WTC11 (cell line): ENCODE measurements at regions of chr20 and their contacts with region 1.

Region 1: GRCh38 chr20:37178839-37179670 is at the starts of genes MROH8 and RPN2:
- DNase-seq: peak; percentile 98
- ATAC-seq: peak; percentile 98
- H3K4me3 Mint-ChIP-seq: peak within 1 kb of the TSS; percentile 81
- H3K27ac Mint-ChIP-seq: peak within 1 kb of the TSS; percentile 98
- H3K4me1 Mint-ChIP-seq: peaks cover 14% of the 10 kb centered on the region
- H3K27me3 Mint-ChIP-seq: no peaks in the 10 kb centered on the region; the same call in 1 of the 2 replicates
- CTCF ChIP-seq: no peak
- total RNA-seq, gene MROH8: 0.50 to 0.92 TPM (median 0.89 TPM) in 3 replicates
- total RNA-seq, gene RPN2: 205 to 233 TPM (median 227 TPM) in 3 replicates

Region 2: GRCh38 chr20:37095599-37096414 is 83.2 kb before region 1 on chr20 and contains the start of gene RBL1:
- CTCF ChIA-PET with region 1: interaction called, 5 read pairs
- POLR2A ChIA-PET with region 1: interaction called, 19 read pairs
- DNase-seq: peak; percentile 91
- ATAC-seq: peak; percentile 93
- H3K4me3 Mint-ChIP-seq: peak within 1 kb of the TSS; percentile 95
- H3K27ac Mint-ChIP-seq: peak within 1 kb of the TSS; percentile 100
- H3K4me1 Mint-ChIP-seq: peaks cover 23% of the 10 kb centered on the region
- H3K27me3 Mint-ChIP-seq: no peaks in the 10 kb centered on the region
- CTCF ChIP-seq: no peak
- total RNA-seq, gene RBL1: 10.5 to 13.2 TPM (median 11.1 TPM) in 3 replicates

Region 3: DNA sequence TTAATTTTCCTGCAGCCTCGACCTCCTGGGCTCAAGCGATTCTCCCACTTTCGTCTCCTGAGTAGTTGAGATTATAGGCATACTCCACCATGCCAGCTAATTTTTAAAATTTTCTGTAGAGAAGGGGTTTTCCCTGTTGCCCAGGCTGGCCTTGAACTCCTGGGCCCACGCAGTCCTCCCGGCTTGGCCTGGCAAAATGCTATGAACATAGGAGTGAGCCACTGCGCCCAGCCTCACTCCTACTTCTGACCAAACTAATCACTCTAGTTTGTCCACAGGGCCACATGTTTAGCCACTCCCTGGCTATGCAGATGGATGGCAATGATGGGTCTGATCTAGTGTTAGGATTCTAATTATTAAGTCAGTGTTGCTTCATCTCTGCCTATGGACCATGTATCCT is 31.8 kb before region 1 on chr20:
- CTCF ChIA-PET with region 1: no interaction called
- POLR2A ChIA-PET with region 1: no interaction called
- DNase-seq: no peak
- ATAC-seq: no peak
- H3K4me3 Mint-ChIP-seq: no peak overlapping the region
- H3K27ac Mint-ChIP-seq: no peak overlapping the region
- H3K4me1 Mint-ChIP-seq: no peaks in the 10 kb centered on the region
- H3K27me3 Mint-ChIP-seq: no peaks in the 10 kb centered on the region; the same call in 1 of the 2 replicates
- CTCF ChIP-seq: no peak

Region 4: GRCh38 chr20:37243937-37244571 is 65.0 kb after region 1 on chr20:
- CTCF ChIA-PET with region 1: no interaction called
- POLR2A ChIA-PET with region 1: no interaction called
- DNase-seq: no peak
- ATAC-seq: no peak
- H3K4me3 Mint-ChIP-seq: no peak overlapping the region
- H3K27ac Mint-ChIP-seq: peak overlapping the region; percentile 97; the same call in 1 of the 2 replicates
- H3K4me1 Mint-ChIP-seq: peaks cover 22% of the 10 kb centered on the region
- H3K27me3 Mint-ChIP-seq: no peaks in the 10 kb centered on the region
- CTCF ChIP-seq: no peak